ENCODE measurements at regions of chr15 and their contacts with region 1.

Region 1: DNA sequence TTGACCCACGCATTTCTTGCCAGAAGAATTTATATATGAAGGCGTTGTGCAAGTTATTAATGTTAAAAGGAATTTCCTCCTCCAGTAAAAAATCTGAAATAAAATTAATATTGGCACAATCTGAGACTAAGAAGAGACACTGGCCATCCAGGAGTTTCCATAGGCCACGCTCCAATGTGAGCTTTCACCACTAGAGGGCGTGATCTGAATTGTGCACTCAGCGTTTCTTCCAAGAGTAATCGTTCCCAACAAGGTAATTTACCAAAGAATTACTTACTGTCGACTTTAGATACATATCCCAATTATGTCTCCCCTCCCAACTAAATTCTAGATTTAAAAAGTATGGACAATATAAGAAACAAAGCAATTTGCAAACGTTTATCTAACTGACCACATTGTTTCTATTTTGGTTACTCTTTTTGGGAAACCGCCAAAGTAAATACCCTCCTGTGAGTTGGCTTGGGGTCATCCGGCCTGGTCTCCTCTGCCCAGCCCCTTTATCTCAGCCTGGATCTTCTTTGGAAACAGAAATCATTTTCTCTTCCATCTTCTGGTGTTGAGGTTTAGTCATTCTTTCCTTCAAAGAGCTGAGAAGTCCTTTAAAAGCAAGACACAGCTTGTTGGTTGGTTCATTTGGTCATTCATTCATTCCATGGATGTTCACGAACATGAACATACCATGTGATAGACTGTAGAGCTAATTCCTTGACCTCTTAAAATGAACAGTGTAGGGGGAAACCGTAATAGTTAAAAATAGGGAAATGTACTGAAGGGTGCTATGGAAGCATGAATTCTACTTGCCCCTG is 26.2 kb downstream of the POLR2M start:
- DNase-seq: peak; percentile 69
- ATAC-seq: peak; percentile 36
- H3K4me3 Mint-ChIP-seq: no peak overlapping the region
- H3K27ac Mint-ChIP-seq: no peak overlapping the region
- H3K4me1 Mint-ChIP-seq: peaks cover 9% of the 10 kb centered on the region
- H3K27me3 Mint-ChIP-seq: no peaks in the 10 kb centered on the region

Region 2: DNA sequence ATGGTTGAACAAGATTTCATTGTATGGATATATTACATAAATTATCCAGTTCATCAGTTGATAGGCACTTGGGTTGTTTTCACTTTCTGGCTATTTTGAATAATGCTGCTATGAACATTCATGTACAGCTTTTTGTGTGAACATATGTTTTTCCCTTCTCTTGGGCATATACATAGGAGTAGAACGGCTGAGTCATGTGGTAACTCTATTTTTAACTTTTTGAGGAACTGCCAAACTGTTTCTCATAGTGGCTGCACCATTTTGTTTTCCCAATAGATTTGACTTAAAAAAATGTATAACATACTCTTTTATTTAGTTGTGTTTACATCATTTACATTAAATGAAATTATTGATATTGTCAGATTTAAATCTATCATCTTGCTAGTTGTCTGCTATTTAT is 1460.3 kb before region 1 on chr15:
- CTCF ChIA-PET with region 1: no interaction called
- POLR2A ChIA-PET with region 1: no interaction called
- intact Hi-C with region 1: no loop called
- DNase-seq: no peak
- ATAC-seq: no peak
- H3K4me3 Mint-ChIP-seq: no peak overlapping the region
- H3K27ac Mint-ChIP-seq: no peak overlapping the region
- H3K4me1 Mint-ChIP-seq: no peaks in the 10 kb centered on the region
- H3K27me3 Mint-ChIP-seq: peaks cover 4% of the 10 kb centered on the region

Region 3: GRCh38 chr15:57720867-57721266 is 11.9 kb before region 1 on chr15:
- CTCF ChIA-PET with region 1: interaction called, 20 read pairs
- POLR2A ChIA-PET with region 1: no interaction called
- intact Hi-C with region 1: no loop called
- DNase-seq: no peak
- ATAC-seq: no peak
- H3K4me3 Mint-ChIP-seq: no peak overlapping the region
- H3K27ac Mint-ChIP-seq: no peak overlapping the region
- H3K4me1 Mint-ChIP-seq: peaks cover 2% of the 10 kb centered on the region
- H3K27me3 Mint-ChIP-seq: no peaks in the 10 kb centered on the region

Measured in activated CD4-positive, alpha-beta T cell treated with anti-CD3 and anti-CD28 coated beads for 36 hours (primary cell).